ENCODE measurements at regions of chr7 and their contacts with region 1.

Region 1: DNA sequence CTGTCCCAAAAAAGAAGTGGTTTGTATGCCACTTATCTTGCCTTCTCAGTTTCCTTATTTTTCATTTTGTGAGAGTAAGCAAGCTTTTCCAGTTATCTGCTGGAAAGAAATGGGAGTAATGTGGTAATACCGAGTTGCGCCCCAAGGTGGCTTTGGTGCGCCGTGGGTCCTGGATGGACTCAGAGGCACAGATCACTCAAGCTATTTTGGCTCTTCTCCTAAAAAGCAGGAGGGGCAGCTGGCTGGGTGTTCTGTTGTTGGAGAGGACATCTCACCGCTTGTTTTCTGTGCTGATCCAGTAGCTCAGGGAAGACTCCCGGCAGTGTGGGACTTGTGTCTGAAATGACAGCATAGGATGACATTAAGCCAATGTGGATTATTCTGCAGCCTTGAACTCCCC is 16.4 kb downstream of the PRKRIP1 start:
- DNase-seq: no peak
- ATAC-seq: no peak
- H3K4me3 Mint-ChIP-seq: no peak overlapping the region
- H3K27ac Mint-ChIP-seq: no peak overlapping the region
- H3K4me1 Mint-ChIP-seq: peaks cover 60% of the 10 kb centered on the region
- H3K27me3 Mint-ChIP-seq: no peaks in the 10 kb centered on the region

Region 2: DNA sequence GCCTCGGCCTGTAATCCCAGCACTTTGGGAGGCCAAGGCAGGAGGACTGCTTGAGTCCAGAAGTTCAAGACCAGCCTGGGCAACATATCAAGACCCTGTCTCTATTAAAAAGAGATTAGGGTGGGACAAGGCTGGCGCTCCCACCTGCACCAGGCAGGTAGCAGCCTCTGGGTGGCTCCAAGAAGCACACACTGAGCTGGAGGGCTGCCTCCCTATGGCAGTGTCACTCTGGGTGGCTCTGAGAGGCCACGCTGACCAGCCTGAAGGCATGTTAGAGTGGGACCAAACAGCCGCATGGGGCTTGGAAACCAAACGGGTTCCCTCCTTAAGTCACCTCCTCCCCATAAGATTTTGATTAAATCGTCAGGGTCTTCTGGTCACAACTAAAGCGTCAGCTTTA is 1069.7 kb before region 1 on chr7:
- CTCF ChIA-PET with region 1: no interaction called
- DNase-seq: no peak
- ATAC-seq: no peak
- H3K4me3 Mint-ChIP-seq: no peak overlapping the region
- H3K27ac Mint-ChIP-seq: no peak overlapping the region
- H3K4me1 Mint-ChIP-seq: no peaks in the 10 kb centered on the region
- H3K27me3 Mint-ChIP-seq: peaks cover 5% of the 10 kb centered on the region

Region 3: DNA sequence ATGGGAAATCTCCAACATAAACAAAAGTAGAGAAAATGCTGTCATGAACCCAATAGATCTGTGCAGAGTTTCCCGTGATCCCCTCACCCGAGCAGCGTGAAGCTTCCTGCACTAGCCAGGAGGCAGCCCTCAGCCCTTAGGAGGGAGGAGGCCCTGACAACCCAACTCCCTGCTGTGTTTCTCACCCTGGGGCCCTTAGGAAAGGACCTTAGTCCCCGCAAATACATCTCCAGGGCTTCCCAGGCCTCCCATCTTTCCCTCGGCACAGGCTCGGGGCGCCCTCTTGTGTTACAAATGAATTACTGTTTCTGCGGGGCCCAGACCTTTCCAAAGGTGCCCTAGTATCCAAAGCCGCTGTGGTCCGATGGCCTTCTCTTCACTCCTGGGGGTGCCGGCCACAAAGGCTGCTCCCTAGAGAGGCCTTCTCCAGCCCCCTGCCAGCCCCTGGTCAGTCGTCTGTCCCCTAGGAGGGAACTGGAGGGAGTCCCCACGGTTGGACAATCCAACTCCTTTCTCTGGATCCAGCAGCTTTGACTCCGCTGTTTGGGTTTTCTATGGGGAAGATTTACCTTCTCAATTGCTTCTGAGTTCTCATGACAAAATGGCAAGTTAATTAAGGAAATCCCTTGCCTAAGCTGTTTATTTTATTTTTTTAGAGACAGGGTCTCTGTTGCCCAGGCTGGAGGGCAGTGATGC is 175.8 kb before region 1 on chr7:
- CTCF ChIA-PET with region 1: no interaction called
- DNase-seq: peak; percentile 52
- ATAC-seq: peak; percentile 76
- H3K4me3 Mint-ChIP-seq: no peak overlapping the region
- H3K27ac Mint-ChIP-seq: no peak overlapping the region
- H3K4me1 Mint-ChIP-seq: no peaks in the 10 kb centered on the region
- H3K27me3 Mint-ChIP-seq: no peaks in the 10 kb centered on the region

Region 4: DNA sequence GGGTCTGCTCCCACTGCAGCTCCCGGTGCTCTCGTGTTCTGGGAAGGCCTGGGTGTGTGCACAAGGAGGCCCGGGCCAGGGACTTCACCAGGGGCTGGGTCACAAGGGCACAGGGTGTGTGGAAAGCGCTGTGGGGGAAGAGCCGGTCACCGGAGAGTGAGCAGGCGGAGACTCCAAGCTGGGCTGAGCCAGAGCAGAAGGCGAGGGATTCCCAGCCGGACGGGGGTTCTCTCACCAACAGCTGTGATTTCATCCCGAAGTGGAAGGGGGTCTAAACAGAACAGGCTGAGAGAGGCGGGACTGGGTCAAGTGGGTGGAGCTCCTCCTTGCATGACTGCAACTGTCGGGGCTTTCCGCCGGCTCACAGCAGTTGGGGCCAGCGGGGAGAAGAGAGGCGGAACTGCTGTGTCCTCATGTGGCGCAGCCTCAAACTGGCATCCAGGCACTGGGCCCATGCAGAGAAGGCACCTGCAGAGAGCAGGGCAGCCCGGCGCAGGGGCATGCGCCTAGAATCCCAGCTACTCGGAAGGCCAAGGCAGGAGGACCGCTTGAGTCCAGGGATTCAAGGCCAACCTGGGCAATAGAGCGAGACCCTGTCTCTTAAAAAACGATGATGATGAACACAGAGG is 13.2 kb after region 1 on chr7:
- CTCF ChIA-PET with region 1: interaction called, 40 read pairs
- DNase-seq: peak; percentile 93
- ATAC-seq: peak; percentile 87
- H3K4me3 Mint-ChIP-seq: peak overlapping the region; percentile 77
- H3K27ac Mint-ChIP-seq: peak overlapping the region; percentile 99
- H3K4me1 Mint-ChIP-seq: peaks cover 65% of the 10 kb centered on the region
- H3K27me3 Mint-ChIP-seq: no peaks in the 10 kb centered on the region

Region 5: GRCh38 chr7:102433219-102434038 is 20.9 kb after region 1 on chr7 and contains the start of gene ORAI2:
- CTCF ChIA-PET with region 1: interaction called, 50 read pairs
- DNase-seq: peak; percentile 89
- ATAC-seq: peak; percentile 71
- H3K4me3 Mint-ChIP-seq: peak within 1 kb of the TSS; percentile 75
- H3K27ac Mint-ChIP-seq: peak within 1 kb of the TSS; percentile 85
- H3K4me1 Mint-ChIP-seq: peaks cover 53% of the 10 kb centered on the region
- H3K27me3 Mint-ChIP-seq: no peaks in the 10 kb centered on the region
- total RNA-seq, gene ORAI2: 58.1 to 73.7 TPM

Region 6: GRCh38 chr7:102450242-102450641 is 37.7 kb after region 1 on chr7:
- CTCF ChIA-PET with region 1: interaction called, 20 read pairs
- DNase-seq: no peak
- ATAC-seq: peak; percentile 74
- H3K4me3 Mint-ChIP-seq: no peak overlapping the region
- H3K27ac Mint-ChIP-seq: no peak overlapping the region
- H3K4me1 Mint-ChIP-seq: no peaks in the 10 kb centered on the region
- H3K27me3 Mint-ChIP-seq: no peaks in the 10 kb centered on the region

Region 7: GRCh38 chr7:102897856-102898531 is 485.4 kb after region 1 on chr7:
- CTCF ChIA-PET with region 1: no interaction called
- DNase-seq: no peak
- ATAC-seq: no peak
- H3K4me3 Mint-ChIP-seq: no peak overlapping the region
- H3K27ac Mint-ChIP-seq: no peak overlapping the region
- H3K4me1 Mint-ChIP-seq: no peaks in the 10 kb centered on the region
- H3K27me3 Mint-ChIP-seq: peaks cover 7% of the 10 kb centered on the region